Activated T-helper 1 cell treated with anti-CD3 and anti-CD28 coated beads, Interleukin-12 subunit alpha, Interleukin-12 subunit beta, Interleukin-2, Interleukin-4 antibody, amounts not matched to agents 30 ng/mL and 10 ng/mL and 1 ng/mL, durations not matched to agents 14 hours and 24 hours and 36 hours (primary cell): ENCODE measurements at regions of chr7 and their contacts with region 1.

Region 1: GRCh38 chr7:138814806-138815332 is 16.9 kb upstream of the ATP6V0A4 start:
- DNase-seq: no peak
- H3K4me3 Mint-ChIP-seq: peak overlapping the region; percentile 11
- H3K27ac Mint-ChIP-seq: peak overlapping the region; percentile 40
- H3K4me1 Mint-ChIP-seq: peaks cover 33% of the 10 kb centered on the region
- H3K27me3 Mint-ChIP-seq: no peaks in the 10 kb centered on the region

Region 2: DNA sequence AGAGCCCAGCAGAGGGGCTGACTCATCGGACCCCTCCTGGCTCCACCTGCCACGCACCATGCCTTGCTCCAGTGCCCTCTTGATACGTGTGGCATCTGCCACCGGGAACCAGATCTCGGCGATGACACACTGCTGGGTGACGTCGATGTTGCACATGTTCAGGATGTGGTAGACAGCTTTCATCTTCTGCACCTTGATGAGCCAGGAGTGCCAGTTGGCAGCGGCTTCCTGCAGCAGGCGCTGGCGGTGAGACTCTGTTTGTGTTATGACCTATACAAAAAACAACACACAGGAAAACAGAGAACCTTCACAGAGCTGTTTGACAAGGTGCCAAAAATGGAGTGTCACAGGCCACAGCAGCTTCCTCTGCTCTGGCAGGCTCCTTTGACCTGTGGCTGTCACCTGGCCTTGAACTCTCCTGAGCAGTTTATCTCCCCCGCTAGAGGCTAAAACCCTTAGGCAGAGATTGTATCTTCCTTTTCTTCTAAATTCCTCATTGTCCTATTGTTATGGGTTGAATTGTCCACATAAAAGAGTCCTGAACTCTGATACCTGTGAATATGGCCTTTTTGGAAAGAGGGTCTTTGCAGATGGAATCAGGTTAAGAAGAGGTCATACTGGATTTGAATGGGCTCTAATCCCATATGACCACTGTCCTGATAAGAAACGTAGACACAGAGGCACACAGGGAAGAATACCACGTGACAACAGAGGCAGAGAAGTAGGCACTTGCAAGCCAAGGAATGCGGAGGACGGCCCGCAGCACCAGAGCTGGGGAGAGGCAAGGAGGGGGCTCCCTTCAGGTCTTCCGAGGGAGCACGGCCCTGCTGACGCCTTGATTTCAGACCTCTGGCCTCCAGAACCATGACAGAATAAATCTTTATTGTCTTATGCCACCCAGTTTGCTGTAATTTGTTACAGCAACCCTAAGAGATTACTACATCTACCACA is 62.0 kb before region 1 on chr7:
- intact Hi-C with region 1: loop called (anchors 1 kb)
- DNase-seq: peak; percentile 86
- H3K4me3 Mint-ChIP-seq: peak overlapping the region; percentile 27
- H3K27ac Mint-ChIP-seq: peak overlapping the region; percentile 80
- H3K4me1 Mint-ChIP-seq: peaks cover 72% of the 10 kb centered on the region
- H3K27me3 Mint-ChIP-seq: peaks cover 1% of the 10 kb centered on the region

Region 3: DNA sequence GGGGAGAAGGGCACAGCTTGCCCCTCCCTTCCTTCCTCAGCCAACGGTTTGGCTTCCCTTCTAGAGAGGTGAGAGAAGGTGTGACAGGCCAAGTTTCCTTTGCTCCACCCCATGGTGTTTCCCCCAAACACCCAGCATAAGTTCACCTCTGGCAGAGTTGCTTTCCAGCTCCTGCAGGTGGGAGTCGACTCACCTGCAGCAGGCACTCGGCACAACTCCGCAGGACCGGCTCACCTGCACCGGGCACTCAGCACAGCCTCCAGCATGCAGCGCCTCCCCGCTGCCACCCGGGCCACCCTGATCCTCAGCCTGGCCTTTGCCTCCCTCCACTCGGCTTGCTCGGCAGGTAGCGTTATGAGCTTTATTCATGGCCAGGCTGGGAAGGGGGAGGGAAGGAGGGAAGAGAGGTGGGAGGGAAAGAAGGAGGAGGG is 17.0 kb before region 1 on chr7 and contains the starts of genes ATP6V0A4 and TMEM213:
- intact Hi-C with region 1: loop called (anchors 2 kb)
- DNase-seq: no peak
- H3K4me3 Mint-ChIP-seq: peak within 1 kb of the TSS; percentile 58
- H3K27ac Mint-ChIP-seq: no peak within 1 kb of the TSS
- H3K4me1 Mint-ChIP-seq: peaks cover 27% of the 10 kb centered on the region
- H3K27me3 Mint-ChIP-seq: no peaks in the 10 kb centered on the region
- total RNA-seq, gene ATP6V0A4: not detected in 2 replicates
- total RNA-seq, gene TMEM213: 0.08 TPM in 1 of 2 replicates, not detected in the other